GM12878 (cell line): ENCODE measurements at regions of chr14 and their contacts with region 1.

Region 1: GRCh38 chr14:22472935-22473854 is 115.8 kb downstream of the DAD1 start:
- DNase-seq: no peak
- ATAC-seq: peak; percentile 67
- H3K4me3 ChIP-seq: no peak overlapping the region
- H3K27ac ChIP-seq: peak overlapping the region; percentile 49
- H3K4me1 ChIP-seq: peaks cover 50% of the 10 kb centered on the region
- H3K27me3 ChIP-seq: no peaks in the 10 kb centered on the region
- CTCF ChIP-seq: peak; percentile 59 to 72 (median 72)
- EP300 ChIP-seq: no peak
- POLR2A ChIP-seq: no peak
- RAD21 ChIP-seq: peak; percentile 96

Region 2: DNA sequence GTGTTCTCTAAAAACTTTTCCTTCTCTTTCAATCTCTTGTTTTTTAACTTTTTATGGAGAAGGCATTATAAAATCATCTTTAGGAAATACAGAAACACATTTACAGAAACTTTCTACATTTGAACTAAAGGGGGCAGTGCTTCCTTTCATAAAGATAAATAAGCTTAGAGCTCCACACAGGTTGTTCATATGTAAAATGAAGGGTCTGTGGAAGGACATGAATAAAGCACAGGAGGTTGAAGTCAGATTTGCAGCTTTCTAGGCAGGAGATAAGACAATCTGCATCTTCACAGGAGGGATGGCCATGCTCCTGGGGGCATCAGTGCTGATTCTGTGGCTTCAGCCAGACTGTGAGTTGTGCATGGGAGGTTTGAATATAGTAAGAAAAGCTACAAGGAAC is 310.1 kb before region 1 on chr14:
- CTCF ChIA-PET with region 1: interaction called, 12 read pairs
- POLR2A ChIA-PET with region 1: no interaction called
- RAD21 ChIA-PET with region 1: interaction called, 5 read pairs
- SMC1A ChIA-PET with region 1: no interaction called
- in situ Hi-C with region 1: no loop called
- intact Hi-C with region 1: no loop called
- DNase-seq: no peak
- ATAC-seq: peak; percentile 64
- H3K4me3 ChIP-seq: no peak overlapping the region
- H3K27ac ChIP-seq: no peak overlapping the region
- H3K4me1 ChIP-seq: no peaks in the 10 kb centered on the region
- H3K27me3 ChIP-seq: peaks cover 2% of the 10 kb centered on the region in 2 experiments; a peak in 2 of 4 replicates
- CTCF ChIP-seq: peak in 2 of 3 experiments; percentile 3 to 28; a peak in 3 of 6 replicates
- EP300 ChIP-seq: no peak
- POLR2A ChIP-seq: no peak
- RAD21 ChIP-seq: peak; percentile 40

Region 3: GRCh38 chr14:22276913-22277816 is 196.0 kb before region 1 on chr14:
- CTCF ChIA-PET with region 1: interaction called, 25 read pairs
- POLR2A ChIA-PET with region 1: no interaction called
- RAD21 ChIA-PET with region 1: interaction called, 6 read pairs
- SMC1A ChIA-PET with region 1: interaction called, 6 read pairs
- in situ Hi-C with region 1: no loop called
- intact Hi-C with region 1: no loop called
- DNase-seq: no peak
- ATAC-seq: 0 out of 3 replicates have a peak, but pooled peaks have one; percentile 31
- H3K4me3 ChIP-seq: no peak overlapping the region
- H3K27ac ChIP-seq: no peak overlapping the region
- H3K4me1 ChIP-seq: no peaks in the 10 kb centered on the region
- H3K27me3 ChIP-seq: peaks cover 0 to 5% of the 10 kb centered on the region in 2 experiments; a peak in 3 of 4 replicates
- CTCF ChIP-seq: peak; percentile 53 to 69 (median 56)
- EP300 ChIP-seq: no peak
- POLR2A ChIP-seq: no peak
- RAD21 ChIP-seq: peak; percentile 49

Region 4: GRCh38 chr14:22319526-22320361 is 153.5 kb before region 1 on chr14:
- CTCF ChIA-PET with region 1: interaction called, 165 read pairs
- POLR2A ChIA-PET with region 1: interaction called, 5 read pairs
- RAD21 ChIA-PET with region 1: interaction called, 59 read pairs
- SMC1A ChIA-PET with region 1: interaction called, 132 read pairs
- in situ Hi-C with region 1: loop called (anchors 5 kb)
- intact Hi-C with region 1: loop called (anchors 2 kb)
- DNase-seq: peak; percentile 42
- ATAC-seq: peak; percentile 97
- H3K4me3 ChIP-seq: no peak overlapping the region
- H3K27ac ChIP-seq: no peak overlapping the region
- H3K4me1 ChIP-seq: no peaks in the 10 kb centered on the region
- H3K27me3 ChIP-seq: no peaks in the 10 kb centered on the region
- CTCF ChIP-seq: peak; percentile 68 to 80 (median 73); a peak in 5 of 6 replicates
- EP300 ChIP-seq: no peak
- POLR2A ChIP-seq: no peak
- RAD21 ChIP-seq: peak; percentile 83

Region 5: GRCh38 chr14:22418631-22419030 is 54.6 kb before region 1 on chr14:
- CTCF ChIA-PET with region 1: interaction called, 13 read pairs
- POLR2A ChIA-PET with region 1: no interaction called
- RAD21 ChIA-PET with region 1: interaction called, 5 read pairs
- SMC1A ChIA-PET with region 1: interaction called, 13 read pairs
- in situ Hi-C with region 1: no loop called
- intact Hi-C with region 1: no loop called
- DNase-seq: peak; percentile 48
- ATAC-seq: peak; percentile 88
- H3K4me3 ChIP-seq: no peak overlapping the region
- H3K27ac ChIP-seq: no peak overlapping the region; the same call in 1 of the 2 replicates
- H3K4me1 ChIP-seq: peaks cover 13% of the 10 kb centered on the region
- H3K27me3 ChIP-seq: no peaks in the 10 kb centered on the region
- CTCF ChIP-seq: no peak
- EP300 ChIP-seq: no peak
- POLR2A ChIP-seq: no peak
- RAD21 ChIP-seq: no peak

Region 6: GRCh38 chr14:22460461-22461195 is 12.6 kb before region 1 on chr14:
- CTCF ChIA-PET with region 1: interaction called, 44 read pairs
- POLR2A ChIA-PET with region 1: interaction called, 9 read pairs
- RAD21 ChIA-PET with region 1: interaction called, 23 read pairs
- SMC1A ChIA-PET with region 1: interaction called, 47 read pairs
- in situ Hi-C with region 1: no loop called
- intact Hi-C with region 1: no loop called
- DNase-seq: no peak
- ATAC-seq: peak; percentile 55
- H3K4me3 ChIP-seq: no peak overlapping the region
- H3K27ac ChIP-seq: peak overlapping the region; percentile 69
- H3K4me1 ChIP-seq: peaks cover 61% of the 10 kb centered on the region
- H3K27me3 ChIP-seq: no peaks in the 10 kb centered on the region
- CTCF ChIP-seq: no peak
- EP300 ChIP-seq: peak; percentile 67 to 69
- POLR2A ChIP-seq: no peak
- RAD21 ChIP-seq: no peak

Region 7: DNA sequence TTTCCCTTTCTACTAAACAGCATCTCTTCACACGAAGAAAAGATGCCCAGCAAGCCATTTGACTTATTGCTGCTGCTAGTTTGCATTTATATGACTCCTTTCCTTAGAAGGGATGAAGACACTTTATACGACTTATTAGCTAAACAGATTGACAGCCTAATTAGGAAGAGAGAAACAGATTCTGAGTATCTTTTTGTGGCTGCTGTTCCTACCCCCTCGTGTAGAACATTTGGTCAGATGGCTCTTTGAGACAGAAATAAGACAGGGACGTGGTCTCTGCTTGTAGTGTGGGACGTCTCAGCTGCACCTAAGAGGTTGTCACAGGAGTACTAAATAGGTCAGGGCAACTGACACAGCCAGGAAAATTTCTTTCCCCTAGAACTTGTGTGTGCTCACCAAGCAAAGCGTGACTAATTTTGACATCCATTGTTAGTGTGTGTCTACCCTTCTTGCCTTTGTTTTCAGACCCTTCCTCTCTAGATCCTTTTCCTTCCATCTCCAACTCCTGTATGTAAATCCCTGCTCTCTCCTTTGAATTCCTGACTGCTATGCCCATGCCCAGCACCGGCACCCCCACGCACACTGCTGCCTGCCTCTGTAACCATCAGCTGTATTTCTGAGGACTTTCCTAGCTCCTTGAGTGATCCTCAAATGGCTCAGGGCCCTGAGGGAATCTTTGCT is 32.6 kb after region 1 on chr14:
- CTCF ChIA-PET with region 1: interaction called, 52 read pairs
- POLR2A ChIA-PET with region 1: interaction called, 875 read pairs
- RAD21 ChIA-PET with region 1: interaction called, 797 read pairs
- SMC1A ChIA-PET with region 1: interaction called, 288 read pairs
- in situ Hi-C with region 1: no loop called
- intact Hi-C with region 1: no loop called
- DNase-seq: no peak
- ATAC-seq: peak; percentile 29
- H3K4me3 ChIP-seq: peak overlapping the region; percentile 68
- H3K27ac ChIP-seq: peak overlapping the region; percentile 98
- H3K4me1 ChIP-seq: peaks cover 50% of the 10 kb centered on the region
- H3K27me3 ChIP-seq: no peaks in the 10 kb centered on the region
- CTCF ChIP-seq: no peak
- EP300 ChIP-seq: peak in 1 of 2 experiments; percentile 49; a peak in 1 of 4 replicates
- POLR2A ChIP-seq: peak; percentile 60; the same call in 1 of the 2 replicates
- RAD21 ChIP-seq: 0 out of 2 replicates have a peak, but pooled peaks have one; percentile 8

Region 8: DNA sequence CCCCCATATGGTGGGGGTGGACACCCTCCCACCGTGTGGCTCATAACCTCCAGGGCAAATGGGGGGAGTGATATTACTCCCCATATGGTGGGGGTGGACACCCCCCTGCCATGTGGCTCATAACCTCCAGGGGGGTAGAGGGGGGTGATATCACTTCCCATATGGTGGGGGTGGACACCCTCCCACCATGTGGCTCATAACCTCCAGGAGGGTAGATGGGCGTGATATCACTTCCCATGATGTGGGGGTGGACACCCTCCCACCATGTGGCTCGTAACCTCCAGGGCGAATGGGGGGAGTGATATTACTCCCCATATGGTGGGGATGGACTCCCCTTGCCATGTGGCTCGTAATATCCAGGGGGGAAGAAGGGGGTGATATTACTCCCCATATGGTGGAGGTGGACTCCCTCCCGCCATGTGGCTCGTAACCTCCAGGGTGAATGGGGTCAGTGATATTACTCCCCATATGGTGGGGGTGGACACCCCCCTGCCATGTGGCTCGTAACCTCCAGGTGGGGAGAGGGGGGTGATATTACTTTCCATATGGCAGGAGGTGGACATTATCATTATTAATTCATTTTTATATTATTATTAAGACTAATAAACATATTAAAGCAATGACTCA is 242.1 kb after region 1 on chr14:
- CTCF ChIA-PET with region 1: no interaction called
- POLR2A ChIA-PET with region 1: no interaction called
- RAD21 ChIA-PET with region 1: no interaction called
- SMC1A ChIA-PET with region 1: no interaction called
- in situ Hi-C with region 1: no loop called
- intact Hi-C with region 1: no loop called
- DNase-seq: no peak
- ATAC-seq: no peak
- H3K4me3 ChIP-seq: no peak overlapping the region
- H3K27ac ChIP-seq: no peak overlapping the region
- H3K4me1 ChIP-seq: peaks cover 3% of the 10 kb centered on the region; the same call in 1 of the 2 replicates
- H3K27me3 ChIP-seq: no peaks in the 10 kb centered on the region
- CTCF ChIP-seq: no peak
- EP300 ChIP-seq: no peak
- POLR2A ChIP-seq: no peak
- RAD21 ChIP-seq: no peak